ENCODE measurements at regions of chr6 and their contacts with region 1.

Region 1: DNA sequence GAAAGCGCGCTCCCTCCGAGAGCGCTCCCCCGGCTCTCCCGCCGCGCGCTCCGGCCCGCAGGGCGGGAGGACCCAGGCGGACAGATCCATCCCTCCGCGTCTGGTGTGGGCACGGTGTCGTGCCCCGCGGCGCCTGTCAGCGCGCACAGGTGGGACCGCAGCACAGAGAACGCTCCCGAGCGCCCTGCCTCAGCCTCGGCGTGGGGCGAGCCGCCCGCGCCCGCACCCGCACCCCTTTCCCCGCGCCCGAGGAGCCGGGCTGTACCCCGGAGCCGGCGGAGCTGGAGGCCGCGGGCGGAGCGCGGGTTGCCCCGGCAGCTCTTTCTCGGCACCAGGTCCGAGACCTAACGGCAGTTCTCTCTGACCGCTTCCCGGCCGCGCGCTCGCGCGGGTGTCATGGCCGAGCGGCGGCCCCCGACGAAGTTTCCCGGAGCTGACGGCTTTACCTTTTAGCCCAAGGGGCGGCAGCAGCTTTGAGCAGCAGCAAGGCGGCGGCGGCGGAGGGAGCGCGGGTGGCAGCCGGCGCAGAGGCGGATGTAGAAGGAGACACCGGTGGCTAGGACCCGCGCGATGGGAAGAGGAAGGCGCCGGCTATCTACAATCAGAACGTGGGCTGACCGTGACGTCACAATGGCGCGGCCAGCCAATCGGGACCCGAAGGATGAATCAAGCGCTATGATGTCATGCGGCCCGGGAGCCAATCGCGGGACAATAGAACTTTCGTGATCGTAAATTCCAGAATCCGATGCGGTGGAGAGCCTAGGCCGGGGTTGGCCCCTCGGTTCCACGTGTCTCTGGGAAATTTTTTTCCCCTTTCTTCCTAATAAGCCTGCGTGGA is at the start of gene ELOVL5:
- DNase-seq: peak; percentile 98
- H3K4me3 Mint-ChIP-seq: peak within 1 kb of the TSS; percentile 93
- H3K27ac Mint-ChIP-seq: peak within 1 kb of the TSS; percentile 95
- H3K4me1 Mint-ChIP-seq: peaks cover 43% of the 10 kb centered on the region
- H3K27me3 Mint-ChIP-seq: no peaks in the 10 kb centered on the region
- total RNA-seq, gene ELOVL5: 112 to 121 TPM

Region 2: GRCh38 chr6:53189554-53189953 is 159.0 kb before region 1 on chr6:
- CTCF ChIA-PET with region 1: interaction called, 3 read pairs
- POLR2A ChIA-PET with region 1: no interaction called
- intact Hi-C with region 1: loop called (anchors 5 kb)
- DNase-seq: no peak
- H3K4me3 Mint-ChIP-seq: no peak overlapping the region
- H3K27ac Mint-ChIP-seq: no peak overlapping the region
- H3K4me1 Mint-ChIP-seq: peaks cover 11% of the 10 kb centered on the region
- H3K27me3 Mint-ChIP-seq: no peaks in the 10 kb centered on the region

Region 3: GRCh38 chr6:53294095-53294494 is 54.5 kb before region 1 on chr6:
- CTCF ChIA-PET with region 1: interaction called, 6 read pairs
- POLR2A ChIA-PET with region 1: no interaction called
- intact Hi-C with region 1: loop called (anchors 2 kb)
- DNase-seq: no peak
- H3K4me3 Mint-ChIP-seq: no peak overlapping the region
- H3K27ac Mint-ChIP-seq: no peak overlapping the region
- H3K4me1 Mint-ChIP-seq: peaks cover 77% of the 10 kb centered on the region
- H3K27me3 Mint-ChIP-seq: no peaks in the 10 kb centered on the region

Region 4: DNA sequence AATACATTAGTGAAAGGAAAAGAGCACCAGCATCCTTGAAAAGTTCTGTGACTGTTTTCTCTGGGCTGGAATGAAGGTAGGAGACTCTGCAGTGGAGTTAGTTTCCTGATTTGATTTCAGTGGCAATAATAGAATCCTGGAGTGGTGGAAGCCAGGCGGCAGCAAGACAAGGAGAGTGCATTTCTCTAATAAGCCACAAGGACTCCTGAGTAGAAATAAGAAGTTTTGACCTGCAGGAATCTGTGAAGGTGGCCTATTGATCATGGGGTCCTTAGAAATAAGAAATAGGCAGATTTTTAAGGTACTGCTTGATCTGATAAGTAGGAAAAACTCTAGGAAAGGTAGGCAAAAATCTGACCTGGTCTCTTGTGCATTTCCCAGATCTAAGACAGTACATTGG is 68.5 kb after region 1 on chr6:
- CTCF ChIA-PET with region 1: no interaction called
- POLR2A ChIA-PET with region 1: no interaction called
- intact Hi-C with region 1: no loop called
- DNase-seq: no peak
- H3K4me3 Mint-ChIP-seq: no peak overlapping the region
- H3K27ac Mint-ChIP-seq: no peak overlapping the region
- H3K4me1 Mint-ChIP-seq: no peaks in the 10 kb centered on the region
- H3K27me3 Mint-ChIP-seq: no peaks in the 10 kb centered on the region

Region 5: DNA sequence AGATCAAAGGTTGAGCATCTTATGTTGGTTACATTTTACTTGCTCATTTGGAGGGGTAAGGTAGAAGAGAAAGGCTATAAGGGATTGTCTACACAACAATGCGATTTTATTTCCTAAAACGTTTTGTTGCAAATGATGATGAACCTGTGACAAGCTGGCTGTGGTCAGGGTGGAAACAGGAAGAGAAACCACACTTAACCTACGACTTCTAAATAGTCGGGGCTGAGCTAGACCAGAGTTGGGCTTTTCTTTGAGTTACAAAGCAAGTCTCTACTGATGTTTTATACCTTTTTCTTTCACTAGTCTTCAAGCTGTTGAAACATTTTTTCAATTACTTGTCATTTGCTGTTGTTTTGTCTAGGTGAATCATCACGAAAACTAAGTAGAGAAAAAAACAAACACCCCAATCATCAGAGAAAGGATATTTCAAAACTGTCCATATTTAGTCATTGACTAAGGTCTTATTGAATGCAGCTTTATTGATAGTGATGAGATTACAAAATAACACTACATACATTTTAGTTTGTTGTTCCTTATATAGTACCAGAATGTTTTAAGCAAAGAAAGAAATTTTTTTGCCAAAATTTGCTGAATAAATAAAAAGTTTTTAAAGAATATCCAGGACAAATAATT is 299.0 kb after region 1 on chr6:
- CTCF ChIA-PET with region 1: no interaction called
- POLR2A ChIA-PET with region 1: no interaction called
- intact Hi-C with region 1: no loop called
- DNase-seq: peak; percentile 63
- H3K4me3 Mint-ChIP-seq: peak overlapping the region; percentile 11
- H3K27ac Mint-ChIP-seq: peak overlapping the region; percentile 76
- H3K4me1 Mint-ChIP-seq: peaks cover 38% of the 10 kb centered on the region
- H3K27me3 Mint-ChIP-seq: no peaks in the 10 kb centered on the region

Measured in activated CD4-positive, alpha-beta memory T cell treated with anti-CD3 and anti-CD28 coated beads for 36 hours (primary cell).